ENCODE measurements at regions of chr11 and their contacts with region 1.

Region 1: GRCh38 chr11:47407746-47408590 is at the start of gene SLC39A13:
- DNase-seq: peak; percentile 75
- H3K4me3 ChIP-seq: peak within 1 kb of the TSS; percentile 95
- H3K27me3 ChIP-seq: no peaks in the 10 kb centered on the region
- CTCF ChIP-seq: peak; percentile 45
- polyA plus RNA-seq, gene SLC39A13: 59.7 and 108 TPM in 2 replicates

Region 2: DNA sequence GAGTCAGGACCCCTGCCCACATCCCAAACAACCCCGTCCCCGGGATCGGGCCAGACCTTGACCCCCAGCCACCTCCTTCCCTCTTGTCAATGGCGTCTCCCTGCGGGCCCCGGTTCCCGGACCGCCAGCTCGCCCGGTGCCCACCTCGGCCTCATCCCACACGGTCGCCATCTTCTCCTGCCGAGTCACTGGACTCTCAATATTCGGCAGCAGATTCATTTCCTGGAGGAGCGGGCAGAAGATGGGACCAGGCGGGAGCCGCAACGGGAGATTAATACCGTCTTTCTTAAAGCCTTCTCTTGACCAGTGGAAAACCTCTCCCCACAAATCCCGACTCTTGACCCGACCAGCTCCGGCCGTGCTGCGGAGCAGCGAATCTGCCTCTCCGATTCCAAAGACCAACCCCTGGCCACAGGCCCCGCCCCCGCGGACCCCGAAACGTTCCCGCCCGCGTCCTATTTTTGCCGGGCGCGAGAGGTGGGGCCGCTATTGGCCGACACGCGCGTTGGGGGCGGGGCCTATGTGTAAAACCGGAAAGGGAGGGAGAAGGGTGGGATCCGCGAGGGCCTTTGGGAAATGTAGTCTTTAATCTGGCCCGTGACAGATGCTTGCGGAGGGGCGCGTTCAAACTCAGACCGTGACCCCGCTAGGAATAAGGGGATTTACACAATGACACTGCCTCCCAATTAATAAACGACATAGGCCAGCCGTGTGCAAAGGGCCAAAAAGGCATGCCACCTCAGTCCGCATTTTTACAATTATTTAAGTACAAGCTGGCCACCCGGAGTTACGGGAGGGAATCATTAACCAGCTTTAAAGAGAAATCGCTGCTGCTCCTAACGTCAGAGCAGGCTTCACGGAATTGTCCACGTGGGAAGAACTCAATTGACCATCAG is 18.3 kb after region 1 on chr11 and contains the start of gene PSMC3:
- CTCF ChIA-PET with region 1: interaction called, 15 read pairs
- POLR2A ChIA-PET with region 1: interaction called, 4 read pairs
- DNase-seq: peak; percentile 64
- H3K4me3 ChIP-seq: peak within 1 kb of the TSS; percentile 82
- H3K27me3 ChIP-seq: no peaks in the 10 kb centered on the region
- CTCF ChIP-seq: no peak
- polyA plus RNA-seq, gene PSMC3: 187 and 191 TPM in 2 replicates

Measured in BJ (cell line).